HEK293 (cell line): ENCODE measurements at regions of chr7 and their contacts with region 1.

Region 1: GRCh38 chr7:90538405-90538804 is 57.7 kb upstream of the CDK14 start:
- H3K4me3 ChIP-seq: no peak overlapping the region
- H3K27ac ChIP-seq: no peak overlapping the region
- H3K4me1 ChIP-seq: no peaks in the 10 kb centered on the region
- CTCF ChIP-seq: no peak

Region 2: GRCh38 chr7:90552521-90552920 is 14.1 kb after region 1 on chr7:
- CTCF ChIA-PET with region 1: interaction called, 11 read pairs
- POLR2A ChIA-PET with region 1: no interaction called
- H3K4me3 ChIP-seq: no peak overlapping the region
- H3K27ac ChIP-seq: no peak overlapping the region
- H3K4me1 ChIP-seq: no peaks in the 10 kb centered on the region
- CTCF ChIP-seq: no peak

Region 3: DNA sequence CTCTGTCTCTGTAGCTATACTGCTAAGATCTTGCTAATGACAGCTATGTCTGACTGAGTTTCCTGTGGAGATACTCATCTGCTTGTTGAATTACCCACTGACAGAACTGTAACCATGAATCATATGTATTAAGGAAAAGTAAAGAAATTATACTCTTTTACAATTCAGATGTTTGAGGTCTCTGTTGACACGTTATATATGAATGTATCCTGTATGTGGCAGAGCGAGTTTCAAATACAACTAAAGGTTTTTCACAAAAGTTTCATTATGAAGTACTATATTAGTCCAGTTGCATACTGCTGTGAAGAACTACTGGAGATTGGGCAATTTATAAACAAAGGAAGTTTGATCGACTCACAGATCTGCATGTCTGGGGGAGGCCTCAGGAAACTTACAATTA is 290.2 kb after region 1 on chr7:
- CTCF ChIA-PET with region 1: no interaction called
- POLR2A ChIA-PET with region 1: no interaction called
- H3K4me3 ChIP-seq: no peak overlapping the region
- H3K27ac ChIP-seq: no peak overlapping the region
- H3K4me1 ChIP-seq: no peaks in the 10 kb centered on the region
- CTCF ChIP-seq: no peak